CD4-positive, alpha-beta memory T cell (primary cell): ENCODE measurements at regions of chr3 and their contacts with region 1.

Region 1: GRCh38 chr3:167740961-167741587 is 5.6 kb downstream of the SERPINI1 start:
- DNase-seq: peak in 3 of 5 donors; percentile 6 to 19 (median 13)
- H3K4me3 ChIP-seq: no peak overlapping the region
- H3K4me3 Mint-ChIP-seq: no peak overlapping the region
- H3K27ac ChIP-seq: no peak overlapping the region
- H3K27ac Mint-ChIP-seq: no peak overlapping the region
- H3K4me1 ChIP-seq: peaks cover 9% of the 10 kb centered on the region
- H3K4me1 Mint-ChIP-seq: peaks cover 6 to 16% (median 9%) of the 10 kb centered on the region in 4 donors
- H3K27me3 ChIP-seq: no peaks in the 10 kb centered on the region
- H3K27me3 Mint-ChIP-seq: no peaks in the 10 kb centered on the region

Region 2: GRCh38 chr3:167380004-167380689 is 360.9 kb before region 1 on chr3 and contains the start of gene ZBBX:
- CTCF ChIA-PET with region 1: interaction called, 8 read pairs
- POLR2A ChIA-PET with region 1: no interaction called
- intact Hi-C with region 1: loop called (anchors 1 kb)
- DNase-seq: peak; percentile 78 to 82 (median 81)
- H3K4me3 ChIP-seq: no peak within 1 kb of the TSS
- H3K4me3 Mint-ChIP-seq: peak within 1 kb of the TSS; percentile 70 to 85 (median 80)
- H3K27ac ChIP-seq: no peak within 1 kb of the TSS
- H3K27ac Mint-ChIP-seq: peak within 1 kb of the TSS in 6 of 7 donors; percentile 67 to 92 (median 85)
- H3K4me1 ChIP-seq: peaks cover 3% of the 10 kb centered on the region
- H3K4me1 Mint-ChIP-seq: peaks cover 5 to 15% (median 7%) of the 10 kb centered on the region in 4 donors
- H3K27me3 ChIP-seq: no peaks in the 10 kb centered on the region
- H3K27me3 Mint-ChIP-seq: peaks cover 2 to 7% of the 10 kb centered on the region in 2 donors
- total RNA-seq, gene ZBBX: not detected